ENCODE measurements at regions of chr1 and their contacts with region 1.

Region 1: GRCh38 chr1:235160957-235161684 is at the start of gene RBM34:
- DNase-seq: peak; percentile 92 to 96
- H3K4me3 ChIP-seq: peak within 1 kb of the TSS; percentile 50
- H3K4me3 Mint-ChIP-seq: peak within 1 kb of the TSS; percentile 98
- H3K27ac Mint-ChIP-seq: peak within 1 kb of the TSS; percentile 99
- H3K4me1 ChIP-seq: peaks cover 14% of the 10 kb centered on the region; the same call in 1 of the 2 replicates
- H3K4me1 Mint-ChIP-seq: peaks cover 12% of the 10 kb centered on the region
- H3K27me3 ChIP-seq: no peaks in the 10 kb centered on the region
- H3K27me3 Mint-ChIP-seq: no peaks in the 10 kb centered on the region
- CTCF ChIP-seq: peak in 1 of 2 experiments; percentile 28
- total RNA-seq, gene RBM34: 96.5 and 103 TPM in 2 replicates

Region 2: GRCh38 chr1:235128456-235129328 is 32.4 kb before region 1 on chr1 and contains the start of gene TOMM20:
- CTCF ChIA-PET with region 1: no interaction called
- POLR2A ChIA-PET with region 1: interaction called, 6 read pairs
- intact Hi-C with region 1: loop called (anchors 5 kb)
- DNase-seq: peak; percentile 98
- H3K4me3 ChIP-seq: peak within 1 kb of the TSS; percentile 81
- H3K4me3 Mint-ChIP-seq: peak within 1 kb of the TSS; percentile 100
- H3K27ac Mint-ChIP-seq: peak within 1 kb of the TSS; percentile 99
- H3K4me1 ChIP-seq: peaks cover 21% of the 10 kb centered on the region
- H3K4me1 Mint-ChIP-seq: peaks cover 15% of the 10 kb centered on the region
- H3K27me3 ChIP-seq: no peaks in the 10 kb centered on the region
- H3K27me3 Mint-ChIP-seq: no peaks in the 10 kb centered on the region
- CTCF ChIP-seq: no peak
- total RNA-seq, gene TOMM20: 131 and 137 TPM in 2 replicates